ENCODE measurements at regions of chr6 and their contacts with region 1.

Region 1: GRCh38 chr6:129251669-129252376 is 368.9 kb downstream of the LAMA2 start:
- DNase-seq: peak; percentile 25
- CTCF ChIP-seq: peak; percentile 84

Region 2: GRCh38 chr6:128694303-128695009 is 557.4 kb before region 1 on chr6:
- CTCF ChIA-PET with region 1: no interaction called
- POLR2A ChIA-PET with region 1: no interaction called
- DNase-seq: no peak
- CTCF ChIP-seq: no peak

Region 3: DNA sequence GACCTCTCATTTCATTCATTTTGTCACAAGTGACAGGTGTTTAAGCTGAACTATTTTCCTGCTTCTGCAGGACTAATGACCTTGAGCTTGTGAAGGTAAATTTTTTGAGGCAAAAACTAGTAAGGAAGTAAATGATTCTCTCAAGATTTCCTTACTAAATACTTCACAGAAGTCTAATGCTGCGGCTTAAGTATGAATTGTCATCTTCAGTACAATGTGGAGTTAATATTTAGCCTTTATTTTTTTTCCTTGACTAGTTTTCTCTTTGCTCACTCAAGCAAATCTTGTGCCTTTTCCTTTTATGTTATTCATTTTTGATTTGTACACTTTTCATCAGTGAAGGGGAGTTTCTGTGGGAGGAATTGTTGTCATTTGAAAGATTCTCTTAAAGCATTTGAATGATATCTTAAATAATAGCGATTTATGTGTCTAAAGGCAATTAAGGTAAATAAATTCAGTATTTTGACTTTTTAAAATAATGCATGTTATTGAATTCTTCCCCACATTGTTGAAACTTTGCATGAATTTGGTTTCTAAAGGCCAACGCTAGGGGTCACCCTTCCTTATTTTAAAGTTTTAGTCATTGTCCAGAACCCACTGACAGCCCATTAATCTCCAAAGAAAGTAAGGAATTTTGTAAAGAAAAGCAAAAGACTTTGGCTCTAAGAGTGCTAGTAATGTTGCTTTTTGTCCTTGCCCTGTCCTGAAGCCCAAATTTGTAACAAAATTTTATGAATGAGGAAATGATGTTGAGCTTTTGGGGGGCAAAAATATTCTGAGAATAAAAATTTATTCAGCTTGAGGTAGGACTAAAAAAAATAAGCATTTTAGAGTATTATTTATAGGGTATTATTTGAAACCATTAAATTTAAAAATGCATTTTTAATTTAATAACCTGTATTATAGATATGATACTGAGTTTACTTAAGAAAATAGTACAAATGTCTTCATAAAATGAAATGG is 526.3 kb before region 1 on chr6:
- CTCF ChIA-PET with region 1: interaction called, 13 read pairs
- POLR2A ChIA-PET with region 1: no interaction called
- DNase-seq: peak; percentile 8
- CTCF ChIP-seq: peak; percentile 62

Region 4: GRCh38 chr6:128899341-128900050 is 352.3 kb before region 1 on chr6:
- CTCF ChIA-PET with region 1: no interaction called
- POLR2A ChIA-PET with region 1: no interaction called
- DNase-seq: no peak
- CTCF ChIP-seq: no peak

Region 5: GRCh38 chr6:129239825-129240491 is 11.9 kb before region 1 on chr6:
- CTCF ChIA-PET with region 1: interaction called, 13 read pairs
- POLR2A ChIA-PET with region 1: no interaction called
- DNase-seq: no peak
- CTCF ChIP-seq: no peak

Region 6: DNA sequence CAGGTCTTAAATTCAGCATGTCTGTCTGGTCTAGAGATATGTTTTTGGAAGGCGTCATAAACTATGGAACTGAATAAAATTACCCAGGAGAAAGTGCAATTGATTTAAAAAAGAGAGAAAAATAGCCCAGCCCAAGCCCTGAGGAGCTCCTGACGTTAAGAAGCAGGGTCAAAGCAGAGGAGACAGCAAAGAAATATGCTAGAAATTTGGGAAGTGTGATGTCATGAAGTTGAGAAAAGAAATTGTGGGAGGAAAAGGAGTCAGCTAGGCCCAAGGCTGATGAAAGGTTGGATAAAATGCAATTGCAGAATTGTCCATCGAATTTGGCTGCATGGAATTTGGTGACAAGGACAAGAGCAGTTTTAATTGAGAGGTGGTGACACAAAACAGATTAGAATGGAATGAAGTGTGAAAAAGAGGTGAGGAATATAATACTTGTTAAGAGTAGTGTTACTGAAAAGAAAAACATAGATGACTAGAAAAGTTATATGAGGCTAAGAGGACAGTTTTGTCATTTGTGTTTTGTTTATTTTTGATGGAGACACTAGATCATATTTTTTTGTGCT is 12.7 kb after region 1 on chr6:
- CTCF ChIA-PET with region 1: interaction called, 34 read pairs
- POLR2A ChIA-PET with region 1: no interaction called
- DNase-seq: no peak
- CTCF ChIP-seq: no peak

Region 7: DNA sequence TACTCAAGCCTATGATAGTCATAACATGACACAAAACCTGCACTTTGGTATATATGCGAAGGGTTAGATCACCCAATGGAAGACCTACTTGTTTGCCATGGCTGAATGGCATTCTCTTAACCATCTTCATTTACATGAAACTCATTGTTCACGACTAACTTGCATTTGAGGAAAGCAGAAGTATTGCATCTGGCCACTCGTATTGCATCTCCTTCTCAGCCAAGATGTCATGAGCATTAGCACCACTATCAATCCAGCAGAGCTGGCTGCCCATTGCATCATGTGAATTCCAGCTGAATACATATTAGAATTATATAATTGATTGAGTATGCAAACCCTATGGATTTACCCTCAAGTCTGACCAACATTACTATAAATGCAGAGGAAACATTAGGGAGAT is 21.3 kb after region 1 on chr6:
- CTCF ChIA-PET with region 1: interaction called, 34 read pairs
- POLR2A ChIA-PET with region 1: no interaction called
- DNase-seq: no peak
- CTCF ChIP-seq: no peak

Region 8: DNA sequence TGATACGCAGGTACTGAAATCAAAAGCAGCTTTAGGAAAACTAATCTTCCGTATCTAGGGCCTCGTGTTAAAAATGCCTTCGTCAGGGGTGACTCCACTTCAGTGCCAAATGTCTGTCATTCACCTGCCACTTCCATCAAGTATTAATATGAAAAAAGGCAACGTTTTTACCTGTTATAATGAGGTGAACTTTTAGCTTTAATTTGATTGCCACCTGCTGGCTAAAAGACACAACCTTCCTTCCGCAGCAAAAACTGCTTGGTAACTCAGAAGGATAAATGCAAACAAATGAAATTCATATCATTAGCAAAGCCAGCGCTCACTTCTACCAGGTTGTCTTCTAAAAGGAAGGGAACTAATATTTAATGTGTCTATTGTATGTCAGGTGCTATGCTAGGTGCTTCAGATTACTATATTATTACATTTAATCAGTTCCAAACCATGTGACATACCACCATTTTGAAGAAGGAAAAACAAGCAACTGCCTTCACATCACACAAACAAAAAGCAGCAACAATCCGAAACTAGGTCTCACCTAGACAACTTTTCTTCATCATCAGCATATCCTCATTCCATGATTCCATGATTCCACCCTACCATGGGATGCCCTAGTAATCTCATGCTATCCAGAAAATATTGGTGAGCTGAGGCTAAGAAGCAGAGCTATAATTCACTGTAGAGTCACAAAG is 478.8 kb after region 1 on chr6:
- CTCF ChIA-PET with region 1: no interaction called
- POLR2A ChIA-PET with region 1: no interaction called
- DNase-seq: peak; percentile 45
- CTCF ChIP-seq: peak; percentile 76